ENCODE measurements at regions of chr6 and their contacts with region 1.

Region 1: DNA sequence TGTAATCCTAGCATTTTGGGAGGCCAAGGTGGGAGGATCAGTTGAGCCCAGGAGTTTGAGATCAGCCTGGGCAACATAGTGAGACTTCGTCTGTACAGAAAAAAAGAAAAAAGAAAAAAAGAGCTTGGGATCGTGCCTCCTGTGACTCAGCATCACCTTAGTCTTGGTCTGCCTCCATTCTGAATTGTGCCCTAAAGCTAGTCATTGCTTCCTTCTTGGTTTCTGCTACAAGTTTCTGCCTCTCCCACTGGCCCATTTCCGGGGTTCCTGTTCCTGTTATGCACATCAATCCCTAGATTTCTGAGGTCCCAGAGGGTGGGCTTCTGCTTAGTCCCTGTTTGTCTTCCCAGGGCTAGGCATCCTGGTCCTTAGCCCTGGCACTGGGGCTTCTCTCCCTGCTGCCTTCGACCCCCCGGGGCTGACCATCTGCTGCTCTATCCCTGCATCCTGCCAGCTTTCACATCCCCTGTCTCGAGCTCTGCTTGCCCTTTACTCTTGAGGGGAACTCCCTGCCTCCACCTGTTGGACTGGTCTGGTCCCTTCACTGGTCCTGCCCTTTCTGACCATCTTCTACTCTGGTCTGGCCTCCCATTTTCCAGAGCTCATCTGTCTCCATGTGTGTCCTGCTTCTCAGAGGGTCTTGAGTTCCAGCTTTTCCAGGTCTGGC is 77.5 kb upstream of the ESR1 start:
- DNase-seq: no peak
- ATAC-seq: no peak
- H3K4me3 ChIP-seq: no peak overlapping the region
- H3K27ac ChIP-seq: no peak overlapping the region
- H3K4me1 ChIP-seq: peaks cover 5% of the 10 kb centered on the region
- H3K27me3 ChIP-seq: no peaks in the 10 kb centered on the region
- CTCF ChIP-seq: no peak

Region 2: GRCh38 chr6:151747896-151748295 is 17.9 kb after region 1 on chr6:
- intact Hi-C with region 1: loop called in 1 of 2 experiments (anchors 1 kb)
- DNase-seq: no peak
- ATAC-seq: peak; percentile 93 to 98 (median 96)
- H3K4me3 ChIP-seq: peak overlapping the region; percentile 2
- H3K27ac ChIP-seq: no peak overlapping the region
- H3K4me1 ChIP-seq: peaks cover 38% of the 10 kb centered on the region
- H3K27me3 ChIP-seq: no peaks in the 10 kb centered on the region
- CTCF ChIP-seq: no peak

Measured in psoas muscle (tissue), 8 donors.